Naive thymus-derived CD4-positive, alpha-beta T cell (primary cell): ENCODE measurements at regions of chr6 and their contacts with region 1.

Region 1: GRCh38 chr6:33585403-33586107 is 5.5 kb upstream of the BAK1 start:
- DNase-seq: peak; percentile 73 to 94 (median 80)
- ATAC-seq: peak; percentile 97
- H3K4me3 ChIP-seq: peak overlapping the region; percentile 10
- H3K4me3 Mint-ChIP-seq: peak overlapping the region in 8 of 10 donors; percentile 16 to 84 (median 51)
- H3K27ac ChIP-seq: peak overlapping the region; percentile 58
- H3K27ac Mint-ChIP-seq: peak overlapping the region; percentile 76 to 96 (median 91)
- H3K4me1 ChIP-seq: peaks cover 10 to 11% of the 10 kb centered on the region in 2 donors
- H3K4me1 Mint-ChIP-seq: peaks cover 0 to 21% (median 17%) of the 10 kb centered on the region in 7 donors
- H3K27me3 ChIP-seq: no peaks in the 10 kb centered on the region
- H3K27me3 Mint-ChIP-seq: no peaks in the 10 kb centered on the region

Region 2: DNA sequence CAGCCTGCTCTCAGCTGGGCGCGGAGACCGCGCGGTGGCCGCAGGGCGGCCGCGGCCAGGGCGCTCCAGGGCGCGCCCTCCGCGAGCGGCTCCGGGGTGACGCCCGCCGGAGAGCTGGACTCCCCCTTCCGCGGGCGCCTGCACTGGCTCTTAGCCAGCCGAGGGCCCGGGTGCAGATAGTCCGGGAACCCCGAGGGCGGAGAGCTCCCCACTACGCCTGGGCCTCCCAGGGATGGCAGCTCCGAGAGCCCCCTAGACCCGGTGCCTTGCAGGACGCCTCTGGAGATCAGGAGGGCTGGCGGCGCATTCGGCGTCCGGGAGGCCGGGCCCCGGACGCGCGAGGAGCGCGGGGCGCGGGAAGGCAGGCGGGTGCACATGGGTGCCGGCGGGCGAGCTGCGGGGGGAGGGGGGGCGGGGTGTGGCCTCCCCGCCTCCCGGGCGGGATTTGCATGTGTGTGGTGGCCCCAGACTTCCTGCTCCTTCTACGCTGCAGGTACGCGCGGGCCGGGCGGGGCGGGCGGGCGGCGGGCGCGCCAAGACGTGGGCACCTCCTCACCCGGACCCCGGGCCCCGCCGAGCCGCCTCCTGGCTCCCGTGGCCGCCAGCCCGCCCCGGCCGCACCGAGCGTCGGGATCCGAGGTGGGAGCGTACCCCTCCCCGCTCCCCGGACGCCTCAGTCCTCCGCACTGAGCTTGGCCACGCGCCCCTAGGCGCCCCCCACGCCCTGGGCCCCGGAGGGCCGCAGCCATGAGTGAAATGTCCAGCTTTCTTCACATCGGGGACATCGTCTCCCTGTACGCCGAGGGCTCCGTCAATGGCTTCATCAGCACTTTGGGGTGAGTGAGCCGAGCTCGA is 35.5 kb after region 1 on chr6 and contains the start of gene ITPR3:
- CTCF ChIA-PET with region 1: interaction called, 4 read pairs
- POLR2A ChIA-PET with region 1: interaction called, 4 read pairs
- intact Hi-C with region 1: loop called (anchors 1 to 2 kb)
- DNase-seq: peak; percentile 63 to 83 (median 80)
- ATAC-seq: peak; percentile 94
- H3K4me3 ChIP-seq: peak within 1 kb of the TSS; percentile 80
- H3K4me3 Mint-ChIP-seq: peak within 1 kb of the TSS; percentile 91 to 97 (median 96)
- H3K27ac ChIP-seq: peak within 1 kb of the TSS; percentile 97
- H3K27ac Mint-ChIP-seq: peak within 1 kb of the TSS; percentile 82 to 96 (median 94)
- H3K4me1 ChIP-seq: peaks cover 9 to 35% of the 10 kb centered on the region in 2 donors
- H3K4me1 Mint-ChIP-seq: peaks cover 29 to 74% (median 66%) of the 10 kb centered on the region in 7 donors
- H3K27me3 ChIP-seq: no peaks in the 10 kb centered on the region
- H3K27me3 Mint-ChIP-seq: peaks cover 0 to 2% (median 0%) of the 10 kb centered on the region in 5 donors
- total RNA-seq, gene ITPR3: 35.6 to 65.7 (median 47.7) TPM

Region 3: GRCh38 chr6:33700391-33701050 is 115.0 kb after region 1 on chr6:
- CTCF ChIA-PET with region 1: interaction called, 37 read pairs
- POLR2A ChIA-PET with region 1: interaction called, 6 read pairs
- intact Hi-C with region 1: loop called (anchors 1 kb)
- DNase-seq: peak; percentile 51 to 76 (median 71)
- ATAC-seq: peak; percentile 78
- H3K4me3 ChIP-seq: no peak overlapping the region
- H3K4me3 Mint-ChIP-seq: peak overlapping the region in 1 of 10 donors; percentile 32
- H3K27ac ChIP-seq: peak overlapping the region; percentile 38
- H3K27ac Mint-ChIP-seq: peak overlapping the region; percentile 53 to 93 (median 84)
- H3K4me1 ChIP-seq: peaks cover 19 to 37% of the 10 kb centered on the region in 2 donors
- H3K4me1 Mint-ChIP-seq: peaks cover 21 to 59% (median 44%) of the 10 kb centered on the region in 7 donors
- H3K27me3 ChIP-seq: no peaks in the 10 kb centered on the region
- H3K27me3 Mint-ChIP-seq: no peaks in the 10 kb centered on the region

Region 4: DNA sequence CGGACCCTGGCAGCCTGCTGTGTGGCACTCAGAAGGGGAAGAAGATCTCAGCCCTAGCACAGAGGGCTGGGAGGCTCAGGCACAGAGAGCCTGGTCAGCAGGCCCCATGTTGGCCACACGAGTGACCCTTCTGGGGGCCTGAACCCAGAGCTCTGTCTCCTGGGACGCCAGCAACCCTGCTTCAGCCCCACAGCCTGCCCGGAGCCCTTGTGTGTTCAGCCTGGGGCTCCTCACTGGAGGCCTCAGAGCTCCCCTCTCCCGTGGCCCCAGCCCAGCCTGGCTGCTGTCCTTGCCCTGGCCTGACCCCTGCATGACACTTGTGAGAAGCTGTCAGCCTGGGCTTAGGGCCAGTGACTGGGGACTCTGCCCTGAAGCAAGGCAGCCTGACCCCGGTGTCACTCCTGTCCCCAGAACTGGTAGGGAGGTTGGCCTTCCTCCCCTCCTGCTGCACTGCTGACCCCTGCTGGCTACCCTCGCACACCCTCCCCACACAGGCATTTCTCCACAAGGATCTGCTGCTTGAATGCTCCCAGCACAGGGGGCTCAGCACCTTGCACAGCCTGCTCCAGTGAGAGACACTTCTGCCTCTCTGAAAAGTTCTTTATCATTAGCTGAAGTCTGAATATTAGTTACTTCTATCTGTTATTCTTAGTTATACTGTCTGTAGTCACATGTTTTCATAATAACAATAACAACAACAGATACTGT is 176.5 kb after region 1 on chr6:
- CTCF ChIA-PET with region 1: interaction called, 4 read pairs
- POLR2A ChIA-PET with region 1: no interaction called
- intact Hi-C with region 1: loop called (anchors 1 kb)
- DNase-seq: peak in 6 of 9 donors; percentile 21 to 34 (median 30)
- ATAC-seq: peak; percentile 67
- H3K4me3 ChIP-seq: no peak overlapping the region
- H3K4me3 Mint-ChIP-seq: no peak overlapping the region
- H3K27ac ChIP-seq: no peak overlapping the region
- H3K27ac Mint-ChIP-seq: peak overlapping the region in 1 of 9 donors; percentile 8
- H3K4me1 ChIP-seq: no peaks in the 10 kb centered on the region
- H3K4me1 Mint-ChIP-seq: no peaks in the 10 kb centered on the region
- H3K27me3 ChIP-seq: no peaks in the 10 kb centered on the region
- H3K27me3 Mint-ChIP-seq: peaks cover 0 to 8% (median 5%) of the 10 kb centered on the region in 5 donors